Naive thymus-derived CD8-positive, alpha-beta T cell (primary cell): ENCODE measurements at regions of chr16 and their contacts with region 1.

Region 1: GRCh38 chr16:57213462-57213861 is 27.3 kb downstream of the RSPRY1 start:
- DNase-seq: no peak
- ATAC-seq: no peak
- H3K4me3 Mint-ChIP-seq: no peak overlapping the region
- H3K27ac Mint-ChIP-seq: no peak overlapping the region
- H3K4me1 Mint-ChIP-seq: peaks cover 0 to 6% (median 0%) of the 10 kb centered on the region in 4 donors
- H3K27me3 Mint-ChIP-seq: no peaks in the 10 kb centered on the region

Region 2: DNA sequence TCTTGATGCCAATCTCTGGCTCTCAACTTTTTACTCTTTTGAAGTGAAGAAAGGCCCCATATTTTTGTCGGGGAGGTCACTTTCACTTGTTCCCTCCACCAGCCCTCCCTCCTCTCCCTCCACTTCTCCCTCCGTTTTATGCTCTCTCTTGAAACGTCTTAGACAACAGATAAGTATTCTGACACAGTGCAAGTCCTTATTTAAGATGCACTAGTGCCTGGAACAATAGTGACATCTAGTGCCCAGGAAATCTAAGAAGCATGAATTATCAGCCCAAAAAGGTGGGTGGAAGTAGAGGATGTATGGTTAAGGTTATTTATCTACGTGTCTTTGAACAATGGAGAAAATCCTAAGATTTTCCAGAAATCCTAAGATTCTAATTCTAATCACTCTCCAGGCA is 45.5 kb before region 1 on chr16:
- POLR2A ChIA-PET with region 1: no interaction called
- DNase-seq: peak in 6 of 10 donors; percentile 33 to 74 (median 58)
- ATAC-seq: peak; percentile 97
- H3K4me3 Mint-ChIP-seq: no peak overlapping the region
- H3K27ac Mint-ChIP-seq: peak overlapping the region in 2 of 10 donors; percentile 5 to 13
- H3K4me1 Mint-ChIP-seq: peaks cover 8 to 22% (median 11%) of the 10 kb centered on the region in 4 donors
- H3K27me3 Mint-ChIP-seq: no peaks in the 10 kb centered on the region

Region 3: GRCh38 chr16:57226701-57227621 is 13.5 kb after region 1 on chr16:
- POLR2A ChIA-PET with region 1: interaction called, 10 read pairs
- DNase-seq: no peak
- ATAC-seq: no peak
- H3K4me3 Mint-ChIP-seq: no peak overlapping the region
- H3K27ac Mint-ChIP-seq: peak overlapping the region in 2 of 10 donors; percentile 15 to 25
- H3K4me1 Mint-ChIP-seq: no peaks in the 10 kb centered on the region
- H3K27me3 Mint-ChIP-seq: no peaks in the 10 kb centered on the region